ENCODE measurements at regions of chr2 and their contacts with region 1.

Region 1: GRCh38 chr2:231463698-231464575 is at the start of gene NCL:
- DNase-seq: peak; percentile 79
- H3K4me3 Mint-ChIP-seq: peak within 1 kb of the TSS; percentile 99
- H3K27ac Mint-ChIP-seq: peak within 1 kb of the TSS; percentile 99
- H3K4me1 Mint-ChIP-seq: peaks cover 43% of the 10 kb centered on the region
- H3K27me3 Mint-ChIP-seq: no peaks in the 10 kb centered on the region
- total RNA-seq, gene NCL: 1,388 and 1,421 TPM in 2 replicates

Region 2: GRCh38 chr2:229921892-229922445 is 1542.0 kb before region 1 on chr2 and contains the start of gene TRIP12:
- intact Hi-C with region 1: loop called (anchors 10 kb)
- DNase-seq: peak; percentile 83
- H3K4me3 Mint-ChIP-seq: peak within 1 kb of the TSS; percentile 97
- H3K27ac Mint-ChIP-seq: peak within 1 kb of the TSS; percentile 96
- H3K4me1 Mint-ChIP-seq: peaks cover 40% of the 10 kb centered on the region
- H3K27me3 Mint-ChIP-seq: no peaks in the 10 kb centered on the region
- total RNA-seq, gene TRIP12: 244 and 253 TPM in 2 replicates

Region 3: GRCh38 chr2:231557571-231558237 is 93.8 kb after region 1 on chr2:
- intact Hi-C with region 1: loop called (anchors 1 kb)
- DNase-seq: peak; percentile 64
- H3K4me3 Mint-ChIP-seq: no peak overlapping the region
- H3K27ac Mint-ChIP-seq: no peak overlapping the region
- H3K4me1 Mint-ChIP-seq: peaks cover 32% of the 10 kb centered on the region
- H3K27me3 Mint-ChIP-seq: no peaks in the 10 kb centered on the region

Region 4: GRCh38 chr2:231612179-231613053 is 148.5 kb after region 1 on chr2:
- intact Hi-C with region 1: loop called (anchors 1 kb)
- DNase-seq: peak; percentile 87
- H3K4me3 Mint-ChIP-seq: peak overlapping the region; percentile 80
- H3K27ac Mint-ChIP-seq: peak overlapping the region; percentile 97
- H3K4me1 Mint-ChIP-seq: peaks cover 65% of the 10 kb centered on the region
- H3K27me3 Mint-ChIP-seq: no peaks in the 10 kb centered on the region

Region 5: DNA sequence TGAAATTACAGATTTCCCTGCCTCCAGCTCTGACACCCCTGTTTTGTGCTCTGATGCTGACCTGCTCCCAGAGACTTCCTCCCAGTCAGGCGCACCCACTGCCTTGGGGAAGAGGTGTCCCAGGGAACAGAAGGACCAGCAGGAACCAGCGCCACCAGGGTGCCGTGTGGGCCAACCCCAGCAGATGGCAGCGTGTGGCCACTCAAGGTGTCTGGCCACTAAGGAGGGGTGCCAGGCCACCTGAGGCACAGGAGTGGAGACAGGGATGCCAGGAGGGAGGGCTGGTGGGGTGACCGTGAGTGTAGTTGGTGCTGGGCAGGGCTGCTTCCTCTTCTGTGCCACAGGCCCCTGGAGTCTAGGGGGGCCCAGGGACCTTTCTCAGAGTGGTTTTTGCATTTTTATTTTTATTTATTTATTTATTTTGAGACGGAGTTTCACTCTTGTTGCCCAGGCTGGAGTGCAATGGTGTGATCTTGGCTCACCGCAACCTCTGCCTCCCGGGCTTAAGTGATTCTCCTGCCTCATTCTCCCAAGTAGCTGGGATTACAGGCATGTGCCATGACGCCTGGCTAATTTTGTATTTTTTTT is 184.7 kb after region 1 on chr2:
- intact Hi-C with region 1: no loop called
- DNase-seq: peak; percentile 54
- H3K4me3 Mint-ChIP-seq: no peak overlapping the region
- H3K27ac Mint-ChIP-seq: no peak overlapping the region
- H3K4me1 Mint-ChIP-seq: peaks cover 29% of the 10 kb centered on the region
- H3K27me3 Mint-ChIP-seq: no peaks in the 10 kb centered on the region

Region 6: GRCh38 chr2:231706731-231707624 is 243.0 kb after region 1 on chr2:
- intact Hi-C with region 1: loop called (anchors 1 kb)
- DNase-seq: peak; percentile 96
- H3K4me3 Mint-ChIP-seq: peak overlapping the region; percentile 99
- H3K27ac Mint-ChIP-seq: peak overlapping the region; percentile 100
- H3K4me1 Mint-ChIP-seq: peaks cover 13% of the 10 kb centered on the region
- H3K27me3 Mint-ChIP-seq: peaks cover 3% of the 10 kb centered on the region

Region 7: GRCh38 chr2:231961349-231962166 is 497.6 kb after region 1 on chr2 and contains the start of gene DIS3L2:
- intact Hi-C with region 1: loop called (anchors 10 kb)
- DNase-seq: peak; percentile 75
- H3K4me3 Mint-ChIP-seq: peak within 1 kb of the TSS; percentile 97
- H3K27ac Mint-ChIP-seq: peak within 1 kb of the TSS; percentile 93
- H3K4me1 Mint-ChIP-seq: peaks cover 22% of the 10 kb centered on the region
- H3K27me3 Mint-ChIP-seq: peaks cover under 1% of the 10 kb centered on the region
- total RNA-seq, gene DIS3L2: 27.9 and 33.1 TPM in 2 replicates